Esophagus muscularis mucosa (tissue), 4 donors: ENCODE measurements at regions of chr4 and their contacts with region 1.

Region 1: DNA sequence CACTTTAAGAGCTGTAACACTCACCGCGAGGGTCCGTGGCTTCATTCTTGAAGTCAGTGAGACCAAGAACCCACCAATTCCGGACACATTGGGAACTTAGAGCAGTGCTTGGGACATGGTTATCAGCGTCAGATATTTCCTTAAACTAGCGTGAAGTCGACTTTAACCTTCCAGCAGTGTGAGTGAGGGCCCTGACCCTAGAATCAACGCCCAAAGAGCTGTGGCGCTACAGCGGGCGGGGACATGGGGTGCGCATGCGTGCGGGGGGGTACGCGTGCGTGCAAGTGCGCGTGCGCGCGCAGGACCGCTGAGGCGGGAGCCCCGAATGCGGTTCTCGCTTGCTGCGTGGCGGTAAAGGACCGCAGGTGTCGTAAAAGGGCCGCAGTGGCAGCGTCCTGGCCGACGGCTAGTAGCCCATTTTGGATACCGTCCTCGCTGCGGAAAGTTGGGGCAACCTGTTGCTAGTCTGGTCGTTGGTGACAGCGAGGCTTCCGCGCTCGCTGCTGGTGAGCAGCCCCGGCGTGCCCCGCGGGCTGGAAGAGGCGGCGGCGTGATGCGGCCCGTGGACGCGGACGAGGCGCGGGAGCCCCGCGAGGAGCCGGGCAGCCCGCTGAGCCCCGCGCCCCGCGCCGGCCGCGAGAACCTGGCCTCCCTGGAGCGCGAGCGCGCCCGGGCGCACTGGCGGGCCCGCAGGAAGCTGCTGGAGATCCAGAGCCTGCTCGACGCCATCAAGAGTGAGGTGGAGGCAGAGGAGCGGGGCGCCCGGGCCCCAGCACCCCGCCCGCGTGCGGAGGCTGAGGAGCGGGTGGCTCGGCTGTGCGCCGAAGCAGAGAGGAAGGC is 19.8 kb upstream of the S100P start:
- DNase-seq: peak; percentile 96
- H3K4me3 ChIP-seq: peak overlapping the region; percentile 81 to 96 (median 82)
- H3K27ac ChIP-seq: peak overlapping the region; percentile 85 to 93 (median 88)
- H3K4me1 ChIP-seq: peaks cover 27 to 48% (median 46%) of the 10 kb centered on the region in 4 donors
- H3K27me3 ChIP-seq: no peaks in the 10 kb centered on the region
- CTCF ChIP-seq: peak in 1 of 3 experiments; percentile 6
- EP300 ChIP-seq: no peak
- POLR2A ChIP-seq: no peak

Region 2: DNA sequence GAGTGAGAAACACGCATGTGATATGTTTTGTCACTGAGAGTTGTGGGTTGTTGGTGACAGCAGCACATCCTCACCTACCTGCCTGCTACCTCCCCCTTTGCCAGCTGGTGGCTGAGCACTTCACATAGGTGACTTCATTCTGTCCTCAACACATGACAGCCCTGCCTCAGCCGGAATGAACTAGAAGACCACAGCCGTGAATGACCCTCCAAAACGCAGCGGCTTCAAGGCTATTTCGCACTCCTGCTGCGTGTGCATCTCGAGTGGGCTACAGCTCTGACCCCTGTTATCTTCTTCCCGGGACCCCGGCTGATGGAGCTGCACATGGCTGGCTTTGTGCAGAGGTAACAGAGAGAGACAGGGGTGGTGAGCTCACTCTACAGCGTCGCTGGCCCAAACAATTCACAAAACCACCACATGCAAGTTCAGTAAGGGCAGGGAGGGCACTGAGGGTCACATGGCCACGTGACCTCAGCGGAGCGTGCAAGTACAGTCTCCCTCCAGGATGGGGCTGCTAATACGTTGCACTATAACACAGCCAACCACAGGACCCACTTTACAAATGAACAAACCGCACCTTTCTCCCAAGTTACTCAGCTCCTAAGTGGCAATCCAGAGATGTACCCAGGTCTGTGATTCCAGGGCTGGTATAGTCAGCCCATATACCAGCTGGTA is 195.2 kb before region 1 on chr4:
- intact Hi-C with region 1: no loop called
- DNase-seq: peak; percentile 91
- H3K4me3 ChIP-seq: no peak overlapping the region
- H3K27ac ChIP-seq: no peak overlapping the region
- H3K4me1 ChIP-seq: no peaks in the 10 kb centered on the region
- H3K27me3 ChIP-seq: peaks cover 0 to 58% (median 4%) of the 10 kb centered on the region in 4 donors
- CTCF ChIP-seq: no peak
- EP300 ChIP-seq: no peak
- POLR2A ChIP-seq: no peak

Region 3: DNA sequence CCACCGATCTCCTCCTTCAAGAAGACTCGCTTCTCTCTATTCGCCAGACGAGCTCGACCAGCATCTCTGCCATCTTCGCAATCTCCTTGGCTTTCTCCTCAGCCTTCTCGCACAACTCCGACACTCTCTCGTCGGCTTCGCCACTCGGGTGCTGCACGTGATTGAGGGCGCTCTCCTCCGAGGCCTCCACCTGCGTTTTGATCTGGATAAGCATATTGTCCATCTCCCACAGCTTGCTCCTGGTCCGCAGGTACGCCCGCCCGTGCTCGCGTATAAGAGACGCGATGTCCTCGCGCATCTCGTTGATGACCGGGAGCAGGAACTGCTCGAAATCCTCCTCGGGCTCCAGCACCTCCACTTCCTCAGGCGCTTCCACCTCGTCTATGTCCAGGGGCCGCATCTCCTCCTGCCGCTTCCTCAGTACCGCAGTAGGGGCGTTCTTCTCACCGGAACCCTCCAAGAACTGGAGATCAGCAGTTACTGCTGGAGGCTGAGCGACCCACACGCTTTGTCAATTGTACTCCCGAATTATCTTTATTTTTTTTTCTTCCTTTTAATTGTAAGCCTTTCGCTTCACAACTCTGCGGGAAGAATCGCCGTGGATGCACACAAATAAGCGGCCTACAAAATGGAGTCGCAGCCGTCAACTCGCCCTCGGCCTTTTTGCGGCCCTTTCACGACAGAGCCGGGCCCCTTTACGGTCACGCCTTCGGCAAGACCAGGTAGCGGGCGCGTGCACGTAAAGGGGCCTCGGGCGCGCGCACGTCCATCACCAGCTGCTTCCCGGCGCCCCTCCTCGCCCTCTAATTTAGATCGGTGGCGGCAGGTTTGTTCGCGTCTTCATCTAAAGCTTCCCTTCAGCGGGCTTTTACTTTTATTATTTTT is 35.6 kb after region 1 on chr4 and contains the start of gene MRFAP1L1:
- intact Hi-C with region 1: loop called (anchors 1 kb)
- DNase-seq: peak; percentile 98
- H3K4me3 ChIP-seq: peak within 1 kb of the TSS; percentile 69 to 79 (median 73)
- H3K27ac ChIP-seq: peak within 1 kb of the TSS; percentile 76 to 89 (median 84)
- H3K4me1 ChIP-seq: peaks cover 35 to 52% (median 52%) of the 10 kb centered on the region in 4 donors
- H3K27me3 ChIP-seq: no peaks in the 10 kb centered on the region
- CTCF ChIP-seq: peak in 2 of 3 experiments; percentile 22 to 30
- EP300 ChIP-seq: no peak
- POLR2A ChIP-seq: no peak
- total RNA-seq, gene MRFAP1L1: 55.2 to 60.0 (median 57.0) TPM

Region 4: DNA sequence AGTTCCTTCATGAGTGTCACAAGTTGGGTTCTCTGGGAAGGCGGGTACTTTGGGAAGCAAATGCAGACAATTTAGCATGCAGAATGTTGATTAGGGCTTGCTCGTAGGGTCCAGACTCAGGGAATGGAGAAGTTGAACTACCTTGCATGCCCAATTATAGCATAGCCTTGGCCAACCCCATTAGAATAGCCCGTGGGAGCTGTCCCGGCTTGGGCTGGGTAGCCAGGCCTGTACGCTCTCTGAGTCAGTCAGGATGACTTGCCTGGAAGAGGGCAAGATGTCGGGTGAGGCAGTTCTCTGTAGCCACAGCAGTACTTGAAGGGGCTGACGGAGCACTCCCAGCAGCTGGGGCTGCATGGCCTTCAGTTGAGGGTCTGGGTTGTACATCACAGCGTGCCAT is 128.1 kb after region 1 on chr4:
- intact Hi-C with region 1: no loop called
- DNase-seq: no peak
- H3K4me3 ChIP-seq: no peak overlapping the region
- H3K27ac ChIP-seq: no peak overlapping the region
- H3K4me1 ChIP-seq: peaks cover 47 to 63% (median 62%) of the 10 kb centered on the region in 4 donors
- H3K27me3 ChIP-seq: no peaks in the 10 kb centered on the region
- CTCF ChIP-seq: no peak
- EP300 ChIP-seq: no peak
- POLR2A ChIP-seq: no peak